ENCODE measurements at regions of chr7 and their contacts with region 1.

Region 1: DNA sequence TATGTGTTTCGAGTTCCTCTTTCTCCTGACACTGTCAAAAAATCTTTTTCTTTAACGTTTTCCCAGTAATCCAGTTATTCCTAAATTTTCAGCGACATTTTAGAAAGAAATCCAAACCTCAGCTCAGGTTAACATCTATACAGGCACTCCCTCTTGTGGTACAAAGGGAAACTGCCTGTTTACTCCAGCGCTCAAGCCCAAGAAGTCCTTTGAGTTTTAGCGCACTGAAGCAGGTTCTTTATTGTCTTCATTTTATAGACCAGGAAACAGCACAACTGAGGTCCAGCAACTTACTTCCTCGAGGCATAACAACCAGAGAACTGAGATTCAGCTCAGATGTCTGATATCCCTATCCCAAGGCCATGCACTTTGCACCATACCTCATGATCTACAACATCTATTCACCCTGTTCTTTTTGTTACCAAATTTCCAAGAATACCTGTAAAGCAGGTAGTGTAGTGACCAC is 287.2 kb upstream of the MKLN1 start:
- DNase-seq: peak; percentile 59
- H3K4me3 Mint-ChIP-seq: no peak overlapping the region
- H3K27ac Mint-ChIP-seq: peak overlapping the region; percentile 78
- H3K4me1 Mint-ChIP-seq: peaks cover 71% of the 10 kb centered on the region
- H3K27me3 Mint-ChIP-seq: no peaks in the 10 kb centered on the region

Region 2: GRCh38 chr7:130896898-130897514 is 143.5 kb before region 1 on chr7:
- CTCF ChIA-PET with region 1: interaction called, 18 read pairs
- POLR2A ChIA-PET with region 1: no interaction called
- intact Hi-C with region 1: loop called (anchors 1 kb)
- DNase-seq: peak; percentile 84
- H3K4me3 Mint-ChIP-seq: peak overlapping the region; percentile 43
- H3K27ac Mint-ChIP-seq: peak overlapping the region; percentile 89
- H3K4me1 Mint-ChIP-seq: peaks cover 95% of the 10 kb centered on the region
- H3K27me3 Mint-ChIP-seq: peaks cover 6% of the 10 kb centered on the region

Region 3: GRCh38 chr7:130988443-130988842 is 52.1 kb before region 1 on chr7:
- CTCF ChIA-PET with region 1: interaction called, 90 read pairs
- POLR2A ChIA-PET with region 1: no interaction called
- intact Hi-C with region 1: no loop called
- DNase-seq: peak; percentile 66
- H3K4me3 Mint-ChIP-seq: peak overlapping the region; percentile 52
- H3K27ac Mint-ChIP-seq: peak overlapping the region; percentile 92
- H3K4me1 Mint-ChIP-seq: peaks cover 88% of the 10 kb centered on the region
- H3K27me3 Mint-ChIP-seq: no peaks in the 10 kb centered on the region

Region 4: GRCh38 chr7:131021460-131021859 is 19.0 kb before region 1 on chr7:
- CTCF ChIA-PET with region 1: interaction called, 13 read pairs
- POLR2A ChIA-PET with region 1: interaction called, 3 read pairs
- intact Hi-C with region 1: no loop called
- DNase-seq: peak; percentile 37
- H3K4me3 Mint-ChIP-seq: peak overlapping the region; percentile 64
- H3K27ac Mint-ChIP-seq: peak overlapping the region; percentile 88
- H3K4me1 Mint-ChIP-seq: peaks cover 80% of the 10 kb centered on the region
- H3K27me3 Mint-ChIP-seq: no peaks in the 10 kb centered on the region

Region 5: DNA sequence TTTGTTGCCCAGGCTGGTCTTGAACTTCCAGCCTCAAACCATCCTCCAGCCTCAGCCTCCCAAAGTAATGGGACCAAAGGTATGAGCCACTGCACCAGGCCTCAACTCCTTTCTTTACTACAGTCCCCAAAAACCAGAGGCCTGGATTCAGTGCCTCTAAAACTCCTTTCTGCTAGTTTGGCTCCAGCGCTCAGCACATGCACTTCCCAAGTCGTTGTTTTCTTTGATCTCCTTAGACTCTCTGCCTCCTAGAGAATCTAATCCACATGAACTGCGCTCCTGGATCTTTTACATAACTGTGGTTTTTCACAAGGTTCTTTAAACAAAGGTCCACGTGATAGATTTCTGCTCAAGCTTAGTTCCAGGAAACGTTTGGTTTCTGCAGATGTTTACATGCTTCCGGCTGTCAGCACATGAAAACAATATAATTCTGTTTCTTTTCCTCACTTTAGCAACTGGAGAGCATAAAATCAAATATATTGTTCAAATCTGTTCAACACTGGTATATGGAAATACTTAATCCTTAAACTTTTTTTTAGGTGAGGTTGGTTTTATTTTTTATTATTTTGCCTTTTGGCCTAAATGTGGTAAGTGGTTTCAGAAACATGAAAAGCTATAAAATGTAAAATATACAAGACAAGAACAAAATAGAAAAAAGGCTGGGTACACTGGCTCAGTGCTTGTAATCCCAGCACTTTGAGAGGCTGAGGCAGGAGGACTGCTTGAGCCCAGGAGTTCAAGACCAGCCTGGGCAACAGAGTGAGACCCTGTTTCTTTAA is 16.7 kb after region 1 on chr7:
- CTCF ChIA-PET with region 1: interaction called, 13 read pairs
- POLR2A ChIA-PET with region 1: interaction called, 4 read pairs
- intact Hi-C with region 1: no loop called
- DNase-seq: no peak
- H3K4me3 Mint-ChIP-seq: peak overlapping the region; percentile 30
- H3K27ac Mint-ChIP-seq: peak overlapping the region; percentile 95
- H3K4me1 Mint-ChIP-seq: peaks cover 66% of the 10 kb centered on the region
- H3K27me3 Mint-ChIP-seq: no peaks in the 10 kb centered on the region

Measured in activated CD4-positive, alpha-beta memory T cell treated with anti-CD3 and anti-CD28 coated beads for 36 hours (primary cell).